PC-3 (cell line): ENCODE measurements at regions of chr10 and their contacts with region 1.

Region 1: GRCh38 chr10:25061711-25062449 is 45.5 kb downstream of the THNSL1 start:
- DNase-seq: peak; percentile 24
- ATAC-seq: no peak; the same call in none of the 2 replicates
- H3K4me3 ChIP-seq: peak overlapping the region; percentile 54
- H3K27ac ChIP-seq: peak overlapping the region; percentile 94
- H3K4me1 ChIP-seq: peaks cover 28% of the 10 kb centered on the region
- H3K27me3 ChIP-seq: no peaks in the 10 kb centered on the region
- CTCF ChIP-seq: no peak

Region 2: DNA sequence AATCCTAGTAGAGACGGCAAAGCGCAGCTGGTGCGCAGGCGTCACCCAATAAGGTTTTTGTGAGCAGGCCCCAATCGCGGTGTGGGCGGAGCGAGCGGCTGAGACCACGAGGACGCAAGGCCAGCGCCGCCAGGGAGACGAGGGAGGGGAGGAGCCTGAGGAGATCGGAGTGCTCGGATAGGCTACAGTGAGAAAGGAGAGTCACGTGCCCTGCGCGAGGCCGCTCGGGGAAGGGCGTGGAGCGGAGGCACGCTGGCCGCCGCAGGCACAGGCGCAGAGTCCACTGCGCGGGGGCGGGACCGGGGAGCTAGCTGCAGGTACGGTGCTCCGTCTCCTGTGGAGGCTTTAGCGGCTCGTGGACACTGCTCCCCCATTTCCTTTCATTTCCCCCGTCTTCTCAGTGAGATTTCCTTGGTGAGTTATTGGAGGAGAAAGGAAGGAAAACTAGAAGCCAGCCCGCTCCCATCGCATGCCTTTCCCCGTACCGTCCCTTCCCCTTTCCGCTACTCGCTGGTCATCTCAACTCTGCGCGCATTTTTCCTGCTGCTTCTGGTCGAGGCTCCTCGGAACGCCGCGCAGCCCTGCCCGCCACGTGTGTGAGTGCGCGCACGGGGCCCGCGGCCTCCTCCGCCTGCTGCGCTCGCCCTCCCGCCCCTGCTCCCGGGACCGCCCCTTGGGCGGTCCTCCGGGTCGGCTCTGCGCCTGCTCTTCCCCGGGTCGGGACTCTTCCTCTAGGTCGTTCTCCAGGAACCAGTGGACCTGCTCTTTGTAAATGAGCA is 45.3 kb before region 1 on chr10 and contains the start of gene THNSL1:
- CTCF ChIA-PET with region 1: no interaction called
- POLR2A ChIA-PET with region 1: interaction called, 3 read pairs
- intact Hi-C with region 1: loop called (anchors 1 kb)
- DNase-seq: peak; percentile 95
- ATAC-seq: peak; percentile 96
- H3K4me3 ChIP-seq: peak within 1 kb of the TSS; percentile 70
- H3K27ac ChIP-seq: peak within 1 kb of the TSS; percentile 89
- H3K4me1 ChIP-seq: peaks cover 19% of the 10 kb centered on the region
- H3K27me3 ChIP-seq: no peaks in the 10 kb centered on the region
- CTCF ChIP-seq: no peak
- total RNA-seq, gene THNSL1: 2.7 and 3.2 TPM in 2 replicates